Esophagus squamous epithelium (tissue), 5 donors: ENCODE measurements at regions of chr1 and their contacts with region 1.

Region 1: GRCh38 chr1:29202584-29203340 is 21.1 kb upstream of the SRSF4 start:
- DNase-seq: peak; percentile 73
- H3K4me3 ChIP-seq: no peak overlapping the region
- H3K27ac ChIP-seq: peak overlapping the region; percentile 77 to 89 (median 86)
- H3K4me1 ChIP-seq: peaks cover 9 to 24% (median 10%) of the 10 kb centered on the region in 3 donors
- H3K27me3 ChIP-seq: no peaks in the 10 kb centered on the region
- CTCF ChIP-seq: peak; percentile 96 to 99 (median 98)
- POLR2A ChIP-seq: no peak

Region 2: GRCh38 chr1:29043274-29043965 is 159.3 kb before region 1 on chr1:
- intact Hi-C with region 1: loop called (anchors 10 kb)
- DNase-seq: no peak
- H3K4me3 ChIP-seq: no peak overlapping the region
- H3K27ac ChIP-seq: no peak overlapping the region
- H3K4me1 ChIP-seq: no peaks in the 10 kb centered on the region
- H3K27me3 ChIP-seq: no peaks in the 10 kb centered on the region
- CTCF ChIP-seq: no peak
- POLR2A ChIP-seq: no peak

Region 3: GRCh38 chr1:29259802-29260441 is 57.2 kb after region 1 on chr1:
- intact Hi-C with region 1: no loop called
- DNase-seq: no peak
- H3K4me3 ChIP-seq: peak overlapping the region; percentile 31 to 72 (median 46)
- H3K27ac ChIP-seq: peak overlapping the region in 1 of 4 donors; percentile 33
- H3K4me1 ChIP-seq: peaks cover 8 to 34% (median 8%) of the 10 kb centered on the region in 3 donors
- H3K27me3 ChIP-seq: peaks cover 0 to 46% (median 0%) of the 10 kb centered on the region in 4 donors
- CTCF ChIP-seq: no peak
- POLR2A ChIP-seq: no peak